Activated CD4-positive, alpha-beta T cell treated with anti-CD3 and anti-CD28 coated beads for 36 hours (primary cell): ENCODE measurements at regions of chr12 and their contacts with region 1.

Region 1: GRCh38 chr12:57520053-57520871 is at the start of gene DDIT3:
- DNase-seq: peak; percentile 100
- ATAC-seq: peak; percentile 76
- H3K4me3 Mint-ChIP-seq: peak within 1 kb of the TSS; percentile 96
- H3K27ac Mint-ChIP-seq: peak within 1 kb of the TSS; percentile 99
- H3K4me1 Mint-ChIP-seq: peaks cover 53% of the 10 kb centered on the region
- H3K27me3 Mint-ChIP-seq: no peaks in the 10 kb centered on the region
- total RNA-seq, gene DDIT3: 31.2 to 32.2 TPM

Region 2: GRCh38 chr12:57088459-57089248 is 431.6 kb before region 1 on chr12 and contains the start of gene NAB2:
- CTCF ChIA-PET with region 1: no interaction called
- POLR2A ChIA-PET with region 1: no interaction called
- intact Hi-C with region 1: loop called in 1 of 2 experiments (anchors 1 kb)
- DNase-seq: peak; percentile 95
- ATAC-seq: peak; percentile 49
- H3K4me3 Mint-ChIP-seq: peak within 1 kb of the TSS; percentile 93
- H3K27ac Mint-ChIP-seq: peak within 1 kb of the TSS; percentile 95
- H3K4me1 Mint-ChIP-seq: peaks cover 63% of the 10 kb centered on the region
- H3K27me3 Mint-ChIP-seq: no peaks in the 10 kb centered on the region
- total RNA-seq, gene NAB2: 46.8 to 48.6 TPM

Region 3: GRCh38 chr12:57462251-57462911 is 57.9 kb before region 1 on chr12:
- CTCF ChIA-PET with region 1: interaction called, 4 read pairs
- POLR2A ChIA-PET with region 1: interaction called, 3 read pairs
- intact Hi-C with region 1: loop called in 1 of 2 experiments (anchors 1 kb)
- DNase-seq: peak; percentile 94
- ATAC-seq: peak; percentile 82
- H3K4me3 Mint-ChIP-seq: peak overlapping the region; percentile 77
- H3K27ac Mint-ChIP-seq: peak overlapping the region; percentile 80
- H3K4me1 Mint-ChIP-seq: peaks cover 54% of the 10 kb centered on the region
- H3K27me3 Mint-ChIP-seq: peaks cover 4% of the 10 kb centered on the region

Region 4: GRCh38 chr12:57546438-57547383 is 26.4 kb after region 1 on chr12 and contains the start of gene DCTN2:
- CTCF ChIA-PET with region 1: no interaction called
- POLR2A ChIA-PET with region 1: interaction called, 8 read pairs
- intact Hi-C with region 1: loop called (anchors 1 kb)
- DNase-seq: peak; percentile 97
- ATAC-seq: peak; percentile 98
- H3K4me3 Mint-ChIP-seq: peak within 1 kb of the TSS; percentile 99
- H3K27ac Mint-ChIP-seq: peak within 1 kb of the TSS; percentile 99
- H3K4me1 Mint-ChIP-seq: peaks cover 45% of the 10 kb centered on the region
- H3K27me3 Mint-ChIP-seq: peaks cover 13% of the 10 kb centered on the region
- total RNA-seq, gene DCTN2: 69.7 to 81.2 TPM

Region 5: GRCh38 chr12:57744777-57745484 is 224.7 kb after region 1 on chr12 and contains the start of gene TSPAN31:
- CTCF ChIA-PET with region 1: no interaction called
- POLR2A ChIA-PET with region 1: interaction called, 3 read pairs
- intact Hi-C with region 1: loop called (anchors 2 to 5 kb)
- DNase-seq: peak; percentile 98
- ATAC-seq: peak; percentile 82
- H3K4me3 Mint-ChIP-seq: peak within 1 kb of the TSS; percentile 94
- H3K27ac Mint-ChIP-seq: peak within 1 kb of the TSS; percentile 98
- H3K4me1 Mint-ChIP-seq: peaks cover 47% of the 10 kb centered on the region
- H3K27me3 Mint-ChIP-seq: no peaks in the 10 kb centered on the region
- total RNA-seq, gene TSPAN31: 13.6 to 15.9 TPM